ENCODE measurements at regions of chr19 and their contacts with region 1.

Region 1: DNA sequence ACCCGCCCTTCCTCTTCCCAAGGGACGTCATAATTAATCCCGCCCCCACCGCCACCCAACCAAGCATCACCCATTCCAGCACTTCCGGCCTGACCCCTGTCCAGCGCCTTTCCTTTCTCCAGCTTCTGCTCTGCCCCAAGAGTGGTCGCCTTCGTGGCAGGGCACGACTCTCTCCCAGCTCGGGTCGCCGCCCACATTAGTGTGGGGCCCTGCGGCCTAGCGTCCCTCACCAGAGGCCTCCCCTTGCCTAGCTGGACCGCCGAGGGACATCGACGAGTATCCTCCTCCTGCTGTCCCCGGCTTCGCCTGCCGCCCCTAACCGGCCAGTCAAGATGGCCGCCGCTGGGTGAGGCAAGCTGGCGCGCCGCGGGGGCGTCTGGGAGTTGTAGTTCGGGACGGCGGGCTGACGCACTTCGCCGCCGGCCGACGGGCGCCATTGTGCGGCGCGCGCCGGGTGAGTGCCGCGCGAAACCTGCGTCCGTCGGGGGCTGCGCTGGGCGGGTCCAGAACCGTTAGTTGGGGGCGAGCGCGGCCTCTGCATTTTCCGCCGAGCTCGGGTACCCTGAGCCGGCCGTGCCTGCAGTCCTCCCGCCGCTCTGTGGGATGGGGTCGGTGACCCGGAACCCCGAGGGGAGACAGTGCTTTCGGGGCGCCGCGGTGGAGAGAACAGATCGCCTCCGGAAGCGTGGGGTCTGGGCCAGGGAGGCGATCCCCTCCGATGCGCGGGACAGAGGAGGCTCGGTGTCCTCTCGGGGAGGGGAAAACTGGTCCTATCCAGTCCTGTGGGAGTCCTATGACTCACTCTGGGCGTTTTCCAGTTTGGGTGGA is at the start of gene ZNF274:
- DNase-seq: peak; percentile 90
- ATAC-seq: peak; percentile 92
- H3K4me3 ChIP-seq: peak within 1 kb of the TSS; percentile 77 to 93 (median 88)
- H3K27ac ChIP-seq: peak within 1 kb of the TSS; percentile 100
- H3K4me1 ChIP-seq: peaks cover 12% of the 10 kb centered on the region
- H3K27me3 ChIP-seq: no peaks in the 10 kb centered on the region; a peak in 1 of 5 replicates
- CTCF ChIP-seq: no peak
- EP300 ChIP-seq: no peak
- POLR2A ChIP-seq: peak; percentile 55 to 77
- RAD21 ChIP-seq: peak; percentile 32; the same call in 1 of the 2 replicates
- total RNA-seq, gene ZNF274: 17.0 and 23.0 TPM in 2 replicates

Region 2: GRCh38 chr19:58002384-58003173 is 180.6 kb before region 1 on chr19 and contains the start of gene ZNF606:
- CTCF ChIA-PET with region 1: no interaction called
- POLR2A ChIA-PET with region 1: interaction called, 16 read pairs
- in situ Hi-C with region 1: no loop called
- intact Hi-C with region 1: no loop called
- DNase-seq: peak; percentile 72
- ATAC-seq: peak; percentile 97
- H3K4me3 ChIP-seq: peak within 1 kb of the TSS; percentile 79 to 97 (median 88)
- H3K27ac ChIP-seq: peak within 1 kb of the TSS; percentile 97
- H3K4me1 ChIP-seq: peaks cover 31% of the 10 kb centered on the region
- H3K27me3 ChIP-seq: no peaks in the 10 kb centered on the region
- CTCF ChIP-seq: peak; percentile 25
- EP300 ChIP-seq: no peak
- POLR2A ChIP-seq: peak in 1 of 2 experiments; percentile 74; a peak in 2 of 4 replicates
- RAD21 ChIP-seq: peak; percentile 41; the same call in 1 of the 2 replicates
- total RNA-seq, gene ZNF606: 8.4 and 14.8 TPM in 2 replicates

Region 3: DNA sequence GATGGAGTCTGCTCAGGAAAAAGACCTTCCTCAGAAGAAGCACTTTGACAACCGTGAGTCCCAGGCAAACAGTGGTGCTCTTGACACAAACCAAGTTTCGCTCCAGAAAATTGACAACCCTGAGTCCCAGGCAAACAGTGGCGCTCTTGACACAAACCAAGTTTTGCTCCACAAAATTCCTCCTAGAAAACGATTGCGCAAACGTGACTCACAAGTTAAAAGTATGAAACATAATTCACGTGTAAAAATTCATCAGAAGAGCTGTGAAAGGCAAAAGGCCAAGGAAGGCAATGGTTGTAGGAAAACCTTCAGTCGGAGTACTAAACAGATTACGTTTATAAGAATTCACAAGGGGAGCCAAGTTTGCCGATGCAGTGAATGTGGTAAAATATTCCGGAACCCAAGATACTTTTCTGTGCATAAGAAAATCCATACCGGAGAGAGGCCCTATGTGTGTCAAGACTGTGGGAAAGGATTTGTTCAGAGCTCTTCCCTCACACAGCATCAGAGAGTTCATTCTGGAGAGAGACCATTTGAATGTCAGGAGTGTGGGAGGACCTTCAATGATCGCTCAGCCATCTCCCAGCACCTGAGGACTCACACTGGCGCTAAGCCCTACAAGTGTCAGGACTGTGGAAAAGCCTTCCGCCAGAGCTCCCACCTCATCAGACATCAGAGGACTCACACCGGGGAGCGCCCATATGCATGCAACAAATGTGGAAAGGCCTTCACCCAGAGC is 29.3 kb after region 1 on chr19:
- CTCF ChIA-PET with region 1: no interaction called
- POLR2A ChIA-PET with region 1: no interaction called
- in situ Hi-C with region 1: no loop called
- intact Hi-C with region 1: no loop called
- DNase-seq: no peak
- ATAC-seq: no peak
- H3K4me3 ChIP-seq: no peak overlapping the region
- H3K27ac ChIP-seq: no peak overlapping the region
- H3K4me1 ChIP-seq: no peaks in the 10 kb centered on the region
- H3K27me3 ChIP-seq: no peaks in the 10 kb centered on the region
- CTCF ChIP-seq: no peak
- EP300 ChIP-seq: no peak
- POLR2A ChIP-seq: no peak
- RAD21 ChIP-seq: no peak

Region 4: DNA sequence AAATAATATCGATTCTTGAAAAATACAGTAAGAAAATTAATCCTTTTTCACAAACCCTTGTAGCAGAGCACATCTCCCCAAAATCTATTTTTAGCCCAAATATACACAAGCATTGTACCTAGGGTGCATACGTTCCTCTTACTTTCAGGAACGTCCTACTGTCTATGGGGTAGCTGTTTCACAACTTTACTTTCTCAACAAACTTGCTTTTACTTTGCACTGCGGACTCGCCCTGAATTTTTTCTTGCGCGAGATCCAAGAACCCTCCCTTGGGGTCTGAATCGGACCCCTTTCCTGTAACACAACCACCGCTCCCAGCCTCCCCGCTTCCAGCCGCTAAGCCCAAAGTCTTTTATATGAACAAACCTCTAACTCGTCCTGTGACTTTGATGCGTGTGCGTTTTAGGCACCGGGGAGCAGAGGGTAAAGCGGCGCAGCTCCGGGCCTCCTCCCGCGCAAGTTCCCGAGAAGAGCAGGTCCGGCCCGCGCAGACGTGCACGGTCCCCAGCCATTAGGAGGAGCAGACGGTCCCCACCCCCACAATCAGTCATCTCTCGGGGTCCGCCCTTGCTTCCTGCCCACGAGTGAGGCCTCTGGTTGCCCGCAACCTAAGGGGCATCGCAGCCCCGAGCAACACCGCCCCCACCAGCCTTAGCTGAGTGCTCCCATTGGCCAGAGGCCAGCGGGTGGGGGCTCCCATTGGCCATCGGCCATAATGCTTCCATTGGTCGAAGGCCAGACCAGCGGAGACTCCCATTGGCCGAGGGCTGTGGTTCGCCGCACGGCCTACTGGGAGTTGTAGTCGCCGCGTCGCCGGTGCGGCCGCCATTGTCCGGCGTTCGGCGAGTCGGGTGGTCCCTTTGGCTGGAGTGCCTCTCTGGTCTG is 95.2 kb after region 1 on chr19 and contains the start of gene ZNF8:
- CTCF ChIA-PET with region 1: no interaction called
- POLR2A ChIA-PET with region 1: interaction called, 15 read pairs
- in situ Hi-C with region 1: no loop called
- intact Hi-C with region 1: loop called (anchors 1 kb)
- DNase-seq: peak; percentile 97
- ATAC-seq: peak; percentile 97
- H3K4me3 ChIP-seq: peak within 1 kb of the TSS; percentile 94 to 96 (median 96)
- H3K27ac ChIP-seq: peak within 1 kb of the TSS; percentile 85
- H3K4me1 ChIP-seq: peaks cover 37% of the 10 kb centered on the region
- H3K27me3 ChIP-seq: no peaks in the 10 kb centered on the region; a peak in 1 of 5 replicates
- CTCF ChIP-seq: peak; percentile 35; the same call in 1 of the 2 replicates
- EP300 ChIP-seq: 0 out of 4 replicates have a peak, but pooled peaks of 1 of the 2 experiments have one; percentile 17
- POLR2A ChIP-seq: peak; percentile 81 to 88
- RAD21 ChIP-seq: no peak
- total RNA-seq, gene ZNF8: 3.3 and 3.7 TPM in 2 replicates

Region 5: DNA sequence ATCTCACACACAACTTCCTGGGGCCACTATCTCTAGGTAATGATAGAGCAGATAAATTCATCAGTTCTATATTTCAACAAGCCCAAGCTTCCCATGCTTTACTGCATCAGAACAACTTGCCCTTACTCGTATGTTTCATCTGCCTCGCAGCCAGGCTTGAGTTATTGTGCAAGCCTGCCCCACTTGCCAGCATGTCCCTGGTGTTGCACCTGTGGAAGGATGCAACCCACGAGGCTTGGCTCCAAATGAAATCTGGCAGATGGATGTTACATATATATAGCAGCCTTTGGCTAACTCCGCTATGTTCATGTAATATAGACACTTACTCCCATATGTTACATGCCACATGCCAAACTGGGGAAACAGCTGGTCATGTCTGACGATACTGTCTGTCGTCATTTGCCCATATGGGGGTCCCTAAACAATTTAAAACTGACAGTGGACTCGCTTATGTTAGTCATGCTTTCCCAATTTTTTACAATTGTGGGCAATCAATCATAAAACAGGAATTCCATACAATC is 128.2 kb after region 1 on chr19:
- CTCF ChIA-PET with region 1: interaction called, 11 read pairs
- POLR2A ChIA-PET with region 1: no interaction called
- in situ Hi-C with region 1: loop called (anchors 5 kb)
- intact Hi-C with region 1: loop called (anchors 5 kb)
- DNase-seq: no peak
- ATAC-seq: no peak
- H3K4me3 ChIP-seq: no peak overlapping the region
- H3K27ac ChIP-seq: no peak overlapping the region
- H3K4me1 ChIP-seq: peaks cover 16% of the 10 kb centered on the region
- H3K27me3 ChIP-seq: no peaks in the 10 kb centered on the region
- CTCF ChIP-seq: no peak
- EP300 ChIP-seq: no peak
- POLR2A ChIP-seq: no peak
- RAD21 ChIP-seq: no peak

Region 6: DNA sequence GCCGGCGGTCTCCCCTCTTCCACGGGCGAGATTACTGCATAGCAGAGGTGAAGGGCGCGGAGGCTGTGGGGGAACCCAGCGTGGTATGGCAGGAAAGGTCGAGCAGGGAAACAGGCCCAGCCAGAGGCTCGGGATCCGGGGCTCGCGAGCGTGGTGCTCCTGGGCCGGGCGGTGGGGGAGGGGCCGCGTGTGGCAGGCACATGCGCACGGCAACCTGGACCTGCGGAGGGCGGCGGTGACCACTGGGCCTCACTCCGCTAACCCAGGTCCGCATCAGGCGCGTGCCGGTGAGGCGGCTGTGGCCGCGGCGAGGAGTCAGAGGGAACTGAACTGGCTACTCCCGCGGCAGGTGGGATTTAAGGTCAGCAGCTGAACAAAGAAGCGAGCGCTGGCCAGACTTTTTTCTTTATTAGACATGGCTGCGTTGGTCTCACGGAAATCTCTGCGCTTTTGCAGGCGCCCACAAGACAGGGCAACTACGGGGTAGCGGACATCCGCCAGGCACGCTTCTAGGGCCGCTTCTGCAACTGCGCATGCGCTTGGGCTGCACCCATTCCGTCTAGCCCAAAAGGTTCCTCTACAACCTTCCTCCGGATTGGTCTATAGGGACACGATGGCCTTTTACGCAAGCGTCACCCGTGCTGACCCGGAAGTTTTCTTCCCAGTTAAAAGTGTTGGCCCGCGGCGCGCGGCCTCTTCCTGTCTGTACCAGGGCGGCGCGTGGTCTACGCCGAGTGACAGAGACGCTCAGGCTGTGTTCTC is 203.6 kb after region 1 on chr19 and contains the start of gene RPS5:
- CTCF ChIA-PET with region 1: no interaction called
- POLR2A ChIA-PET with region 1: interaction called, 6 read pairs
- in situ Hi-C with region 1: no loop called
- intact Hi-C with region 1: loop called (anchors 5 kb)
- DNase-seq: peak; percentile 99
- ATAC-seq: peak; percentile 88
- H3K4me3 ChIP-seq: peak within 1 kb of the TSS; percentile 83 to 98 (median 92)
- H3K27ac ChIP-seq: peak within 1 kb of the TSS; percentile 99
- H3K4me1 ChIP-seq: peaks cover 52% of the 10 kb centered on the region
- H3K27me3 ChIP-seq: no peaks in the 10 kb centered on the region; a peak in 1 of 5 replicates
- CTCF ChIP-seq: no peak
- EP300 ChIP-seq: no peak
- POLR2A ChIP-seq: peak; percentile 85 to 98
- RAD21 ChIP-seq: no peak; the same call in none of the 2 replicates
- total RNA-seq, gene RPS5: 1,544 and 1,715 TPM in 2 replicates

Measured in HepG2 (cell line).